ENCODE measurements at regions of chr12 and their contacts with region 1.

Region 1: GRCh38 chr12:127108360-127109215 is 1158.4 kb upstream of the TMEM132C start:
- DNase-seq: peak; percentile 35
- ATAC-seq: peak; percentile 89
- H3K4me3 ChIP-seq: no peak overlapping the region
- H3K27ac ChIP-seq: no peak overlapping the region
- H3K4me1 ChIP-seq: peaks cover 22 to 23% of the 10 kb centered on the region in 2 experiments
- H3K27me3 ChIP-seq: no peaks in the 10 kb centered on the region
- CTCF ChIP-seq: peak; percentile 65 to 76 (median 74); a peak in 5 of 6 replicates
- POLR2A ChIP-seq: no peak
- RAD21 ChIP-seq: peak; percentile 83

Region 2: GRCh38 chr12:126926023-126926594 is 182.5 kb before region 1 on chr12:
- CTCF ChIA-PET with region 1: interaction called, 7 read pairs
- POLR2A ChIA-PET with region 1: no interaction called
- RAD21 ChIA-PET with region 1: no interaction called
- intact Hi-C with region 1: loop called (anchors 5 kb)
- DNase-seq: no peak
- ATAC-seq: 0 out of 2 replicates have a peak, but pooled peaks have one; percentile 63
- H3K4me3 ChIP-seq: no peak overlapping the region
- H3K27ac ChIP-seq: no peak overlapping the region
- H3K4me1 ChIP-seq: no peaks in the 10 kb centered on the region
- H3K27me3 ChIP-seq: no peaks in the 10 kb centered on the region
- CTCF ChIP-seq: peak in 1 of 3 experiments; percentile 14; a peak in 2 of 6 replicates
- POLR2A ChIP-seq: no peak
- RAD21 ChIP-seq: peak; percentile 52

Region 3: DNA sequence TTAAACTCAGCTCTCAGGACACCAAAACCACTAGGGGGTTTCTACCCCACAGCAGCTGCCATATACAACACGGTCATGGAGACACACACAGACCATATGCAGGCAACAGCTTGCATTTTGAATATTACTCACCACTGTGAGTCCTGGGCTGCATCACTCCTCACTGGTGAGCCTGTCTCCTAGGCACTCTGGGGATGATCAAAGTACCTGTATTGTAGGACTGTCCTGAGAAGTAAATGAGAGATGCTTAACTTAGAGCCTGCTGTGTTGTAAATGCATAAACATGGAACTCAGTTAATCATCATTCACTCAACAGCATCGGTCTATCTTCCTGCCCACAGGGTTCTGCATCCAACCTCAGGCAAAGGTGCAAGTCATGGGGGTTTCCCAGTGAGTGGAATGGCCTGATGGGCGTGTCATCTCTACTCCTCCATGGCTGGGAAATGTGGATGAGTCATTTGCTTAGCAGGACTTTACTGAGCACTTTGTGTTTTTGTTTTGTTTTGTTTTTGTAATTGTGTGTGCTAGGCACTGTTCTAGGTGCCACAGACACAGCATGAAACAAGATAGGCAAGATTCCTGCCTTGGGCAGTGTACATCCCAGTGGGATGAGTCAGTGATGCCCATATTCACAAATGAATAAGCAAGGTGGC is 17.1 kb after region 1 on chr12:
- CTCF ChIA-PET with region 1: interaction called, 10 read pairs
- POLR2A ChIA-PET with region 1: no interaction called
- RAD21 ChIA-PET with region 1: no interaction called
- intact Hi-C with region 1: no loop called
- DNase-seq: peak; percentile 97
- ATAC-seq: peak; percentile 84
- H3K4me3 ChIP-seq: peak overlapping the region; percentile 15 to 33
- H3K27ac ChIP-seq: peak overlapping the region; percentile 85
- H3K4me1 ChIP-seq: peaks cover 47 to 61% of the 10 kb centered on the region in 2 experiments
- H3K27me3 ChIP-seq: no peaks in the 10 kb centered on the region
- CTCF ChIP-seq: 0 out of 6 replicates have a peak, but pooled peaks of 1 of the 3 experiments have one; percentile 2
- POLR2A ChIP-seq: no peak
- RAD21 ChIP-seq: peak; percentile 21; the same call in 1 of the 2 replicates

Region 4: GRCh38 chr12:127355061-127355841 is 246.7 kb after region 1 on chr12:
- CTCF ChIA-PET with region 1: interaction called, 10 read pairs
- POLR2A ChIA-PET with region 1: no interaction called
- RAD21 ChIA-PET with region 1: no interaction called
- intact Hi-C with region 1: loop called (anchors 5 kb)
- DNase-seq: no peak
- ATAC-seq: peak; percentile 89
- H3K4me3 ChIP-seq: no peak overlapping the region
- H3K27ac ChIP-seq: no peak overlapping the region
- H3K4me1 ChIP-seq: no peaks in the 10 kb centered on the region
- H3K27me3 ChIP-seq: no peaks in the 10 kb centered on the region
- CTCF ChIP-seq: peak in 2 of 3 experiments; percentile 58 to 62; a peak in 4 of 6 replicates
- POLR2A ChIP-seq: no peak
- RAD21 ChIP-seq: peak; percentile 52

Region 5: GRCh38 chr12:127381048-127381668 is 272.6 kb after region 1 on chr12:
- CTCF ChIA-PET with region 1: interaction called, 5 read pairs
- POLR2A ChIA-PET with region 1: no interaction called
- RAD21 ChIA-PET with region 1: no interaction called
- intact Hi-C with region 1: loop called (anchors 1 kb)
- DNase-seq: peak; percentile 21
- ATAC-seq: peak; percentile 99
- H3K4me3 ChIP-seq: no peak overlapping the region
- H3K27ac ChIP-seq: no peak overlapping the region
- H3K4me1 ChIP-seq: no peaks in the 10 kb centered on the region
- H3K27me3 ChIP-seq: no peaks in the 10 kb centered on the region
- CTCF ChIP-seq: peak; percentile 74 to 93 (median 92)
- POLR2A ChIP-seq: no peak
- RAD21 ChIP-seq: peak; percentile 89

Measured in HCT116 (cell line).